Pancreas (tissue), 10 donors: ENCODE measurements at regions of chr13 and their contacts with region 1.

Region 1: GRCh38 chr13:44449999-44450708 is 76.5 kb downstream of the SERP2 start:
- DNase-seq: no peak
- ATAC-seq: peak; percentile 54 to 80 (median 66)
- H3K4me3 ChIP-seq: no peak overlapping the region
- H3K27ac ChIP-seq: no peak overlapping the region
- H3K4me1 ChIP-seq: peaks cover 3 to 5% (median 5%) of the 10 kb centered on the region in 3 donors
- H3K27me3 ChIP-seq: no peaks in the 10 kb centered on the region
- CTCF ChIP-seq: no peak

Region 2: GRCh38 chr13:43905435-43906031 is 544.6 kb before region 1 on chr13:
- intact Hi-C with region 1: loop called in 2 of 3 experiments (anchors 10 kb)
- DNase-seq: peak in 2 of 6 donors; percentile 16 to 46
- ATAC-seq: peak in 3 of 4 donors; percentile 77 to 92 (median 83)
- H3K4me3 ChIP-seq: no peak overlapping the region
- H3K27ac ChIP-seq: no peak overlapping the region
- H3K4me1 ChIP-seq: peaks cover 0 to 2% (median 0%) of the 10 kb centered on the region in 3 donors
- H3K27me3 ChIP-seq: no peaks in the 10 kb centered on the region
- CTCF ChIP-seq: peak; percentile 62 to 72 (median 70)

Region 3: GRCh38 chr13:44293908-44294735 is 156.0 kb before region 1 on chr13:
- intact Hi-C with region 1: no loop called
- DNase-seq: no peak
- ATAC-seq: peak in 1 of 4 donors; percentile 43
- H3K4me3 ChIP-seq: no peak overlapping the region
- H3K27ac ChIP-seq: no peak overlapping the region
- H3K4me1 ChIP-seq: peaks cover 0 to 3% (median 0%) of the 10 kb centered on the region in 3 donors
- H3K27me3 ChIP-seq: no peaks in the 10 kb centered on the region
- CTCF ChIP-seq: no peak